HCT116 (cell line): ENCODE measurements at regions of chr11 and their contacts with region 1.

Region 1: GRCh38 chr11:65013692-65014145 is 241 bp upstream of the ARL2 start:
- DNase-seq: peak; percentile 80
- ATAC-seq: peak; percentile 84
- H3K4me3 ChIP-seq: peak overlapping the region; percentile 71 to 75
- H3K27ac ChIP-seq: peak overlapping the region; percentile 87
- H3K4me1 ChIP-seq: peaks cover 15 to 34% of the 10 kb centered on the region in 2 experiments
- H3K27me3 ChIP-seq: no peaks in the 10 kb centered on the region
- CTCF ChIP-seq: peak in 1 of 3 experiments; percentile 87; a peak in 1 of 6 replicates
- POLR2A ChIP-seq: no peak
- RAD21 ChIP-seq: no peak

Region 2: GRCh38 chr11:64787526-64788320 is 226.0 kb before region 1 on chr11:
- CTCF ChIA-PET with region 1: no interaction called
- POLR2A ChIA-PET with region 1: no interaction called
- RAD21 ChIA-PET with region 1: no interaction called
- intact Hi-C with region 1: loop called (anchors 2 kb)
- DNase-seq: no peak
- ATAC-seq: peak; percentile 91
- H3K4me3 ChIP-seq: no peak overlapping the region
- H3K27ac ChIP-seq: 0 out of 2 replicates have a peak overlapping the region, but pooled peaks have one; percentile 1
- H3K4me1 ChIP-seq: peaks cover 2 to 9% of the 10 kb centered on the region in 2 experiments; a peak in 3 of 4 replicates
- H3K27me3 ChIP-seq: no peaks in the 10 kb centered on the region
- CTCF ChIP-seq: peak; percentile 71 to 95 (median 93); a peak in 5 of 6 replicates
- POLR2A ChIP-seq: no peak
- RAD21 ChIP-seq: peak; percentile 85

Region 3: GRCh38 chr11:65027213-65028067 is 13.7 kb after region 1 on chr11 and contains the start of gene SNX15:
- CTCF ChIA-PET with region 1: interaction called, 7 read pairs
- POLR2A ChIA-PET with region 1: interaction called, 3 read pairs
- RAD21 ChIA-PET with region 1: no interaction called
- intact Hi-C with region 1: loop called (anchors 1 kb)
- DNase-seq: peak; percentile 97
- ATAC-seq: peak; percentile 93
- H3K4me3 ChIP-seq: peak within 1 kb of the TSS; percentile 39 to 44
- H3K27ac ChIP-seq: peak within 1 kb of the TSS; percentile 75
- H3K4me1 ChIP-seq: peaks cover 11 to 22% of the 10 kb centered on the region in 2 experiments; a peak in 3 of 4 replicates
- H3K27me3 ChIP-seq: no peaks in the 10 kb centered on the region
- CTCF ChIP-seq: peak; percentile 12 to 61 (median 42); a peak in 4 of 6 replicates
- POLR2A ChIP-seq: peak; percentile 49
- RAD21 ChIP-seq: no peak
- total RNA-seq, gene SNX15: 16.8 TPM

Region 4: DNA sequence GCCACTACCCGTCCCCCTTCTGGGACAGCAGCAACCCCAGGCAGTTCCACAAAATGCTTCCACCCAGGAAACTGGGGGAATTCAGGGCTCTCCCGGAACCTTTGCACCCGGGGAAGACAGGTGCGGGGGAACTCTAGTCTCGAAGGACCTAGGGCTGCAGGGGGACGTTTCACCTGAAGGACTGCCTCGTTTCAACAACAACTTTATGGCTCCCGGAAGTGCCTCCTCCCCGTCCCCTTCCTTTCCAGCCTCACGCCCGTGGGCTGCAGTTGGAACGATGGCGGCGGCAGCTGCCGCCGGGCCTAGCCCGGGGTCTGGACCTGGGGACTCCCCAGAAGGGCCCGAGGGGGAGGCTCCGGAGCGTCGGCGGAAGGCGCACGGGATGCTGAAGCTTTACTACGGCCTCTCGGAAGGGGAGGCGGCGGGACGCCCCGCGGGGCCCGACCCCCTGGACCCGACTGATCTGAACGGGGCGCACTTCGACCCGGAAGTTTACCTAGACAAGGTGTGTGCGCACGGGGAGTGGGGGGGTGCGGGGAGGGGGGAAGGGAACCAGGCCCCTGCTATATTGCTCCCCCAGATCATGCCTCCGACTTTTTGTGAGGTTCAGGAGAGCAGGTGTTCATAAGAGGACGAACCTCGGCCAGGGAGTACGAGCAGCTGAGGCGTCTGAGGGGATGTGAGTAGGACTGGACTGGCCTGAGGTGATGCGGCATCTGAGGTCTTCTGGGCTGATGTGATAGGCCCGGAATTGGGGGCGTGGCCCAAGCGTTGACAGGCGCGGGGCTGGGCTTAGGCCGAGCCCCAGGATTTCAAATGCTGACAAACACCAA is 82.5 kb after region 1 on chr11 and contains the start of gene VPS51:
- CTCF ChIA-PET with region 1: no interaction called
- POLR2A ChIA-PET with region 1: no interaction called
- RAD21 ChIA-PET with region 1: no interaction called
- intact Hi-C with region 1: loop called (anchors 5 kb)
- DNase-seq: peak; percentile 88
- ATAC-seq: peak; percentile 97
- H3K4me3 ChIP-seq: peak within 1 kb of the TSS; percentile 74 to 78
- H3K27ac ChIP-seq: peak within 1 kb of the TSS; percentile 63
- H3K4me1 ChIP-seq: peaks cover 3 to 12% of the 10 kb centered on the region in 2 experiments; a peak in 3 of 4 replicates
- H3K27me3 ChIP-seq: no peaks in the 10 kb centered on the region
- CTCF ChIP-seq: no peak
- POLR2A ChIP-seq: peak; percentile 94
- RAD21 ChIP-seq: no peak
- total RNA-seq, gene VPS51: 89.5 TPM

Region 5: DNA sequence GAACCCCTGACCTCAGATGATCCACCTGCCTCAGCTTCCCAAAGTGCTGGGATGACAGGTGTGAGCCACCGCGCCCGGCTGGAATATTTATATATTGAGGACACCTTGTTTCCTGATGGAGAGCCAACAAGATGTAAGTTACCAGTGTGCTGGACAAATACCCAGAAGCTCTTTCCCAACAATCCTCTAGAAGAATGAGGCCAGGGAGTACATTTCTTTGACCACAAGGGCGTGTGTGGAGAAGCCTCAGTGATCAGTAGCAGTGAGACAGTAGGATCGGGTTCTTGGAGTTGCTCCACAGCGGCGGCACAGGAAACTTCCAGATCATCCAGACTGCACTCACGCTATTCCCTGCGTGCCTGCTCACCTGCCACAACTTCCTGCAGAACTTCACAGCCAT is 237.8 kb after region 1 on chr11:
- CTCF ChIA-PET with region 1: no interaction called
- POLR2A ChIA-PET with region 1: no interaction called
- RAD21 ChIA-PET with region 1: no interaction called
- intact Hi-C with region 1: loop called (anchors 10 kb)
- DNase-seq: no peak
- ATAC-seq: no peak
- H3K4me3 ChIP-seq: no peak overlapping the region
- H3K27ac ChIP-seq: no peak overlapping the region
- H3K4me1 ChIP-seq: peaks cover 3 to 6% of the 10 kb centered on the region in 2 experiments; a peak in 1 of 4 replicates
- H3K27me3 ChIP-seq: no peaks in the 10 kb centered on the region
- CTCF ChIP-seq: 0 out of 6 replicates have a peak, but pooled peaks of 1 of the 3 experiments have one; percentile 1
- POLR2A ChIP-seq: no peak
- RAD21 ChIP-seq: no peak